ENCODE measurements at regions of chr1 and their contacts with region 1.

Region 1: GRCh38 chr1:177959811-177960515 is 9.9 kb downstream of the SEC16B start:
- DNase-seq: peak; percentile 33
- H3K4me3 ChIP-seq: no peak overlapping the region
- H3K27ac ChIP-seq: no peak overlapping the region
- H3K4me1 ChIP-seq: no peaks in the 10 kb centered on the region
- H3K27me3 ChIP-seq: no peaks in the 10 kb centered on the region
- CTCF ChIP-seq: peak; percentile 44 to 53

Region 2: GRCh38 chr1:178282949-178283367 is 323.0 kb after region 1 on chr1:
- CTCF ChIA-PET with region 1: no interaction called
- dilution Hi-C with region 1: no loop called
- in situ Hi-C with region 1: loop called in 1 of 2 experiments (anchors 10 kb)
- intact Hi-C with region 1: loop called (anchors 2 kb)
- DNase-seq: peak; percentile 72
- H3K4me3 ChIP-seq: no peak overlapping the region
- H3K27ac ChIP-seq: peak overlapping the region; percentile 55
- H3K4me1 ChIP-seq: peaks cover 29% of the 10 kb centered on the region
- H3K27me3 ChIP-seq: no peaks in the 10 kb centered on the region
- CTCF ChIP-seq: peak; percentile 48 to 56

Region 3: GRCh38 chr1:178300352-178300699 is 340.4 kb after region 1 on chr1:
- CTCF ChIA-PET with region 1: no interaction called
- dilution Hi-C with region 1: no loop called
- in situ Hi-C with region 1: no loop called
- intact Hi-C with region 1: loop called (anchors 5 kb)
- DNase-seq: no peak
- H3K4me3 ChIP-seq: no peak overlapping the region
- H3K27ac ChIP-seq: peak overlapping the region; percentile 47
- H3K4me1 ChIP-seq: peaks cover 10% of the 10 kb centered on the region
- H3K27me3 ChIP-seq: no peaks in the 10 kb centered on the region
- CTCF ChIP-seq: no peak

Measured in mammary epithelial cell (primary cell).